ENCODE measurements at regions of chr7 and their contacts with region 1.

Region 1: GRCh38 chr7:99143853-99144672 is at the start of gene SMURF1:
- DNase-seq: peak; percentile 52
- H3K4me3 ChIP-seq: peak within 1 kb of the TSS; percentile 65 to 89 (median 77)
- H3K27ac ChIP-seq: peak within 1 kb of the TSS; percentile 83
- H3K4me1 ChIP-seq: peaks cover 7% of the 10 kb centered on the region
- H3K27me3 ChIP-seq: no peaks in the 10 kb centered on the region
- CTCF ChIP-seq: no peak
- total RNA-seq, gene SMURF1: 42.5 to 43.2 TPM

Region 2: DNA sequence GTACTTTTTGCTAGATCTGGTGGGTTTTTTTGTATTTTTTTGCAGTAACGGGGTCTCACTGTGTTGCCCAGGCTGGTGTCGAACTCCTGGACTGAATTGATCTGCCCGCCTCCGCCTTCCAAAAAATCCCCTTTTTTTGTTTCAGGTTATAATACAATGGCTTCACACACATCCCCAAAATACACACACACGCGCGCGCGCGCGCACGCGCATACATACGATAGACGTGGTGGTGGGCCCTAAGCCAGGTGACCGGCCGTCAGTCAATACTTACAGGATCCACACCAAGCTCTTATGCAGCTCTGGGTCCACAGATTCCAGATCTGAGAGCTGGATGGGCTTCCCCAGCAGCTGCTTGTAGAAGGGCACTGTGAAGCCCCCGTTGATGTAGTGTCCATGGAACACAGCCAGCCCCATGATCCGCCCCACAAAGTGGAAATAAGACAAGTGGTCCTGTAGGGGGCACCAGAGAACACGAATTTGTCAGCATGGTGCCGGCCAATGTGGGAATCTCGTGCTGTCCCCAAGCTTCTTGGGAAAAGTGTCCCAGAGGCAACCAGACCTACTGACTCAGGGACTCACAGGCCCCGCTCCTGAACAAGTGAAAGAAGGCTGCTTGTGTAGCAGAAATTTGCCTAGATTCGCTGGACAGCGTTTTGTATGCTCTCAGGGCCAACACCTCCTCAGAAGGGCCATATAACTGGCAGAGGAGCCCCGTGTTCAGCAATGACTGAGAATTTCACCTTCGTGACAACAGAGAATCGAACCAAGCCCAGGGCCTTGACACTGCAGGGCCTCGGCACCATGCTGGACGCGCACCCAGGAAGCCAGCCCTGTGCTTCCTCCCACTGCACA is 103.7 kb before region 1 on chr7:
- CTCF ChIA-PET with region 1: interaction called, 3 read pairs
- dilution Hi-C with region 1: no loop called
- in situ Hi-C with region 1: no loop called
- intact Hi-C with region 1: loop called (anchors 1 kb)
- DNase-seq: peak; percentile 65
- H3K4me3 ChIP-seq: no peak overlapping the region
- H3K27ac ChIP-seq: no peak overlapping the region
- H3K4me1 ChIP-seq: no peaks in the 10 kb centered on the region
- H3K27me3 ChIP-seq: no peaks in the 10 kb centered on the region
- CTCF ChIP-seq: peak; percentile 51 to 65

Region 3: DNA sequence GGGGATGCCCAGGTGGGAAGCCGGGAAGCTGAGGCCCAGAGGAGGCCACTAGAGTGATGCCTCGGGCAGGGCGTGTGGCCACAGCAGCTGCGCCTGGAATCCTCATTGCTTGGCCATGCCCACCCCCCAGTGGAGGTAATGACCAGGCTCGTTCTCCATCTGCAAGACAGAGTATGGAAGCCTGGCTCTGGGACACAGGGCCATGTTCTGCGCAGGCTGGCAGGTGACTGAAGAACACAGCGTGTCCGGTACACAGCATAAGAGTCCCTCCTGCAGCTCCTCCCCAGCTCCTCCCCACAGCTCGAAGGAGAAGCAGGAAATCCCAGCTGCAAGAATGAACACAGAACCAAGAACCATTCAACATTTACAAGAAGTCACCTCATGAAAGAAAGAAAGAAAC is 65.0 kb before region 1 on chr7:
- CTCF ChIA-PET with region 1: no interaction called
- dilution Hi-C with region 1: no loop called
- in situ Hi-C with region 1: no loop called
- intact Hi-C with region 1: no loop called
- DNase-seq: no peak
- H3K4me3 ChIP-seq: no peak overlapping the region
- H3K27ac ChIP-seq: no peak overlapping the region
- H3K4me1 ChIP-seq: peaks cover 10% of the 10 kb centered on the region
- H3K27me3 ChIP-seq: no peaks in the 10 kb centered on the region
- CTCF ChIP-seq: no peak

Region 4: DNA sequence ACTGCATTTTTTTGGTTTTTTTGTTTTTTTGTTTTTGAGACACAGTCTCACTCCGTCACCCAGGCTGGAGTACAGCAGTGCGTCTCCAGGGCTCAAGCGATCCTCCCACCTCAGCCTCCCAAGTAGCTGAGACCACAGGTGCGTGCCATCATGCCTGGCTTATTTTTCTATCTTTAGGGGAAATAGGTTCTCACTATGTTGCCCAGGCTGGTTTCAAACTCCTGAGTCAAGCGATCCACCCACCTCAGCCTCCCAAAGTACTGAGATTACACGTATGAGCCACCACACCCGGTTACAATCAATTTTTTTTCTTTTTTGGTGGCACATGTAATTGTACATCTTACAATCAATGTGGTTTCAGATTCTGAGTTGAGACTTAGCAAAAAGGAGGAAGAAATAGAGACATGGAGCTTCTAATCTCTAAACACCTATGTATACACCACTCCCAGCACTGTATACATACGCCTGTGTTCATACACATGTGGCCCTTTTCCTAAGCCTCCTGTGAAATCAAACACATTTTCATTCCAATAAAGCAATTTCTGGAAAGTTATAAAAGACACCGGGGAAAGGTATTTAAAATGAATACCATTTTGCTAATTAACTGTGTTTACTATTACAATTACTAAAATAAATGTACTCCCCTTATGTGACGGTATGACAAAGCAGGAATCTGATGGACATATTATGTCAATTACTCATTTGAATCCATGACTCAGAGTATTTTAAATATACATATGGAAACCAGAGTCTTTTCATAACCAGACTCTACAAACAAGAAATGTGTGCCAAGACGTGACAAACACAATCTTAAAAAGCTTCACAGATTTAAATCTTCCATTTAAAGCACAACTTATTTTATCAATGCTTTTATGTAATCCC is 41.0 kb before region 1 on chr7:
- CTCF ChIA-PET with region 1: no interaction called
- dilution Hi-C with region 1: no loop called
- in situ Hi-C with region 1: no loop called
- intact Hi-C with region 1: loop called (anchors 2 kb)
- DNase-seq: peak; percentile 72
- H3K4me3 ChIP-seq: peak overlapping the region in 1 of 3 experiments; percentile 21
- H3K27ac ChIP-seq: peak overlapping the region; percentile 84
- H3K4me1 ChIP-seq: peaks cover 58% of the 10 kb centered on the region
- H3K27me3 ChIP-seq: no peaks in the 10 kb centered on the region
- CTCF ChIP-seq: no peak

Region 5: GRCh38 chr7:99200691-99201440 is 56.8 kb after region 1 on chr7:
- CTCF ChIA-PET with region 1: no interaction called
- dilution Hi-C with region 1: no loop called
- in situ Hi-C with region 1: no loop called
- intact Hi-C with region 1: loop called (anchors 2 kb)
- DNase-seq: peak; percentile 99
- H3K4me3 ChIP-seq: no peak overlapping the region
- H3K27ac ChIP-seq: peak overlapping the region; percentile 93
- H3K4me1 ChIP-seq: peaks cover 20% of the 10 kb centered on the region
- H3K27me3 ChIP-seq: no peaks in the 10 kb centered on the region
- CTCF ChIP-seq: no peak

Region 6: GRCh38 chr7:99210264-99210970 is 66.4 kb after region 1 on chr7:
- CTCF ChIA-PET with region 1: no interaction called
- dilution Hi-C with region 1: no loop called
- in situ Hi-C with region 1: no loop called
- intact Hi-C with region 1: loop called (anchors 2 kb)
- DNase-seq: peak; percentile 93
- H3K4me3 ChIP-seq: no peak overlapping the region
- H3K27ac ChIP-seq: peak overlapping the region; percentile 90
- H3K4me1 ChIP-seq: peaks cover 26% of the 10 kb centered on the region
- H3K27me3 ChIP-seq: no peaks in the 10 kb centered on the region
- CTCF ChIP-seq: no peak

Region 7: DNA sequence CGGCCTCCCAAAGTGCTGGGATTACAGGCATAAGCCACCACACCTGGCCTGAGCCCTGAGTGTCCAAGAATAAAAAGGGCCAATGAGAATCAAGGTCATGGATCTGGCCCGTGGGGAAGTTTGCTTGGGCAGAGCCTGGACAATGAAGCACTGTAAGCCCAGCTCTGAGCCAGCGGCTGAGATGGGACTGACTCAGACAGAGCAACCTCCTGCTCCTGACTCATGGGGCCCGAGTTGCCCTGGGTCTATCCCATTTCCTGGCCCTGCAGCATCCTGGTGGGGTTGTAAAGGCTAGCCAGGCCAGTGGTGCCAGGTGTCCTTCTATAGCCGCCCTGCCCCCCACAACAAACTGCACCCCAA is 123.4 kb after region 1 on chr7:
- CTCF ChIA-PET with region 1: no interaction called
- dilution Hi-C with region 1: no loop called
- in situ Hi-C with region 1: no loop called
- intact Hi-C with region 1: loop called (anchors 2 kb)
- DNase-seq: peak; percentile 99
- H3K4me3 ChIP-seq: no peak overlapping the region
- H3K27ac ChIP-seq: peak overlapping the region; percentile 88
- H3K4me1 ChIP-seq: peaks cover 28% of the 10 kb centered on the region
- H3K27me3 ChIP-seq: no peaks in the 10 kb centered on the region
- CTCF ChIP-seq: no peak

Region 8: GRCh38 chr7:99374103-99375064 is 230.3 kb after region 1 on chr7 and contains the start of gene ARPC1B:
- CTCF ChIA-PET with region 1: no interaction called
- dilution Hi-C with region 1: no loop called
- in situ Hi-C with region 1: no loop called
- intact Hi-C with region 1: no loop called
- DNase-seq: peak; percentile 71
- H3K4me3 ChIP-seq: peak within 1 kb of the TSS; percentile 64 to 82 (median 79)
- H3K27ac ChIP-seq: peak within 1 kb of the TSS; percentile 53
- H3K4me1 ChIP-seq: peaks cover 27% of the 10 kb centered on the region
- H3K27me3 ChIP-seq: no peaks in the 10 kb centered on the region
- CTCF ChIP-seq: no peak
- total RNA-seq, gene ARPC1B: 196 to 228 TPM

Measured in mammary epithelial cell (primary cell).